ENCODE measurements at regions of chr11 and their contacts with region 1.

Region 1: GRCh38 chr11:67507864-67508485 is at the start of gene CDK2AP2:
- DNase-seq: peak; percentile 91 to 99 (median 97)
- ATAC-seq: peak; percentile 71
- H3K4me3 ChIP-seq: peak within 1 kb of the TSS; percentile 76
- H3K4me3 Mint-ChIP-seq: peak within 1 kb of the TSS; percentile 93
- H3K27ac ChIP-seq: peak within 1 kb of the TSS; percentile 87 to 97
- H3K27ac Mint-ChIP-seq: peak within 1 kb of the TSS; percentile 98
- H3K4me1 ChIP-seq: peaks cover 50% of the 10 kb centered on the region
- H3K4me1 Mint-ChIP-seq: peaks cover 44% of the 10 kb centered on the region
- H3K27me3 ChIP-seq: peaks cover 0 to 9% of the 10 kb centered on the region in 2 experiments
- H3K27me3 Mint-ChIP-seq: no peaks in the 10 kb centered on the region
- CTCF ChIP-seq: no peak
- total RNA-seq, gene CDK2AP2: 19.5 to 22.0 TPM

Region 2: DNA sequence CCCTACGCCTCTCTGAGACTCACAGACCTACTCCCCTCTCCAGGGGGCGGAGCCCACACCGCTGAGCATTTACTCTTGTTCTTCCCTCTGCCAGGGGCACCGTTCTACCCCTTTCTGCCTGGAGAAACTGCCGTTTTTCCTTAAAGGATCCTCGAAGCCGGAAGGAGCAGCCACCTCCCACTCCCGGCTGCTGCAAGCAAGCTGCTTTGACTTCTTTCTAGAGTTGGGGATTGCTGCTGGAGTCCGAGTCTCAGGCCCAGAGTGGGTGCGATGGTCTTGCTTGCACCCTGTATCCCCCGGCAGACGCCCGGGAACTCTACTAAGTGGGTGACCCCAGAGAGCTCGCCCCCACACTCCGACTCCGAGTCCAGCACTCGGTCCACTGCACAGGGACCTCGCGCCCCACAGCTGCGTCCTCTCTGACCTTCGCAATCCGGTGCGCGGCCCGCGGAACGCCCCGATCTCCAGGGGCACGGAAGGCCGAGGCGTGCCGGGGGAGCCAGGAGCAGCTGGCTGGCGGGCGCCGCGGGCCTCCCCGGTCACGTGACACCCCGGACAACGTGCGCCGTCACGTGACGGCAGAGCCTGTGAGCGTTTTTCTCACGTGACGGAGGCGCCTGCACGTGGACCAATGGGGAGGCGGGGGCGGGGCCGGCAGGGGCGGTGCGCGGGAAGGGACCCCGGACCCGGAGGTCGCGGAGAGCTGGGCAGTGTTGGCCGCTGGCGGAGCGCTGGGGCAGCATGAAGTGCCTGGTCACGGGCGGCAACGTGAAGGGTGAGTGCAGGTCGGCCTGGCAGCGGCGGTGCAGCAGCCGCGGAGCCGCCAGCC is 116.5 kb before region 1 on chr11 and contains the start of gene RAD9A:
- CTCF ChIA-PET with region 1: interaction called, 4 read pairs
- POLR2A ChIA-PET with region 1: interaction called, 3 read pairs
- intact Hi-C with region 1: loop called (anchors 1 kb)
- DNase-seq: peak; percentile 82 to 97 (median 90)
- ATAC-seq: peak; percentile 83
- H3K4me3 ChIP-seq: peak within 1 kb of the TSS; percentile 90
- H3K4me3 Mint-ChIP-seq: peak within 1 kb of the TSS; percentile 88
- H3K27ac ChIP-seq: peak within 1 kb of the TSS; percentile 55 to 77
- H3K27ac Mint-ChIP-seq: peak within 1 kb of the TSS; percentile 76
- H3K4me1 ChIP-seq: peaks cover 42% of the 10 kb centered on the region
- H3K4me1 Mint-ChIP-seq: peaks cover 38% of the 10 kb centered on the region
- H3K27me3 ChIP-seq: no peaks in the 10 kb centered on the region
- H3K27me3 Mint-ChIP-seq: no peaks in the 10 kb centered on the region
- CTCF ChIP-seq: no peak
- total RNA-seq, gene RAD9A: 19.3 to 20.3 TPM

Region 3: DNA sequence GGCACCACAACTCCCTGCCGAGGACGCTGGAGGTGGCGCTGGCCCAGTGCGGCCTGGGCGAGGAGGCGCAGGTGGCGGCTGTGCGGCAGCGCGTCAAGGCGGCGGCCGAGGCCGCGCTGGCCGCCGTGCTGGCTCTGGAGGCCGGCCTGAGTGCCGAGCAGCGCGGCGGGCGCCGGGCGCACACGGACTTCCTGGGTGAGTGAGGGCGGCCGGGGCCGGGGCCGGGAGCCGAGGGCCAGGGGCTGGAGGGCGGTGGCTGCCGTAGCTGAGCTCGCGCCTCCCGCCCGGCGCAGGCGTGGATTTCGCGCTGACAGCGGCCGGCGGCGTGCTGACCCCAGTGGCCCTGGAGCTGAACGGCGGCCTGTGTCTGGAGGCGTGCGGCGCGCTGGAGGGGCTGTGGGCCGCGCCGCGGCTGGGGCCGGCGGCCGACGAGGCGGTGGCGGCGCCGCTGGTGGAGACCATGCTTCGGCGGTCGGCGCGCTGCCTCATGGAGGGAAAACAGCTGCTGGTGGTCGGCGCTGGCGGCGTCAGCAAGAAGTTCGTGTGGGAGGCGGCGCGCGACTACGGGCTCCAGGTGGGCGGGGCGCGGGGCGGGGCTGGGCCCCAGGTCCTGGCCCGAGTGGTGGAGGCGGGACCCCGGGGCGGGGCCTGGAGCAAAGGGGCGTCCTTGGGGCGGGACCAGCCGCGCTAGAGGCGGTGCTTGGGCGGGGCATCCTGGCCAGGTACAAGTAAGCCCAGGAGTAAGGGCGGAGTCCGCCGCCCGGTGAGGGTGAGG is 87.1 kb before region 1 on chr11:
- CTCF ChIA-PET with region 1: no interaction called
- POLR2A ChIA-PET with region 1: interaction called, 4 read pairs
- intact Hi-C with region 1: loop called in 1 of 2 experiments (anchors 5 kb)
- DNase-seq: peak; percentile 97 to 100 (median 99)
- ATAC-seq: peak; percentile 79
- H3K4me3 ChIP-seq: peak overlapping the region; percentile 50
- H3K4me3 Mint-ChIP-seq: peak overlapping the region; percentile 86
- H3K27ac ChIP-seq: peak overlapping the region; percentile 15 to 79
- H3K27ac Mint-ChIP-seq: peak overlapping the region; percentile 94
- H3K4me1 ChIP-seq: peaks cover 57% of the 10 kb centered on the region
- H3K4me1 Mint-ChIP-seq: peaks cover 56% of the 10 kb centered on the region
- H3K27me3 ChIP-seq: no peaks in the 10 kb centered on the region
- H3K27me3 Mint-ChIP-seq: no peaks in the 10 kb centered on the region
- CTCF ChIP-seq: no peak

Region 4: DNA sequence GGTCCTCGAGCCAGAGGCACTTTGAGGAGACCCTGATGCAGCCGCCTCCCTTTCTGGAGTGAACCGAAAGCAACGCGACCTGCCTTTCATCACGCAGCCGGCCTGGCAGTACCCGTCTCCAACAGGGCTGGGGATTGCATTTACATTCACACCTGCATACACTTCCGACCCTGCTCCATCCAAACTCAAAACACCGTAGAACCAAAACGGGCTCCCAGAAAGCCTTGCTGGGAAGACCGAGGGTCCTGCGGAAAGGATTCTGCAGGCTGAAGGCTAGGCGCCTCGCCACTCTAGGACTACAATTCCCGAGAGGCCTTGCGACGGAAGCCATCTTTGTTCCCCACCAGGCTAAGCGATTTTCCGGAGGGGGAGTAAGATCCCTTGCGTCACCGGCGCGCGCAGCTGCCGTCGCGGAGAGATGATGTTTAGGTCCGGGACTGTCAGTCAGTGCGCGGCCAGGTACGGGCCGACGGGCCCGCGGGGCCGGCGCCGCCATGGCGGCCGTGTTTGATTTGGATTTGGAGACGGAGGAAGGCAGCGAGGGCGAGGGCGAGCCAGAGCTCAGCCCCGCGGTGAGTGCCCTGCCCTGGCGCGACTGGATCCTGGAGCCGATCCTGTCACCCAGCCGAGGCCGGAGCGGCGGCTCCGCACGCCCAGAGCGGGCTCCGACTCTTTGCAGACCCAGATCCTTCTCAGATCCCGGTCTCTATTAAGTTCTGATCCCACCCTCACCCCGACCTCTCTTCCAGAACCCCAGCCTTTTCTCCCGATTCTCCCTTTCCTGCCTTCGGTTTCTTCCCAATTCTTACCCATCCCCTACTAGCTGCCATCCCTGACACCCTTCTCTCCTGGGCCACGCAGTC is 79.7 kb before region 1 on chr11 and contains the start of gene RPS6KB2:
- CTCF ChIA-PET with region 1: no interaction called
- POLR2A ChIA-PET with region 1: interaction called, 4 read pairs
- intact Hi-C with region 1: loop called in 1 of 2 experiments (anchors 2 kb)
- DNase-seq: peak; percentile 96 to 100 (median 99)
- ATAC-seq: peak; percentile 84
- H3K4me3 ChIP-seq: peak within 1 kb of the TSS; percentile 92
- H3K4me3 Mint-ChIP-seq: peak within 1 kb of the TSS; percentile 98
- H3K27ac ChIP-seq: peak within 1 kb of the TSS; percentile 85 to 86
- H3K27ac Mint-ChIP-seq: peak within 1 kb of the TSS; percentile 96
- H3K4me1 ChIP-seq: peaks cover 59% of the 10 kb centered on the region
- H3K4me1 Mint-ChIP-seq: peaks cover 33% of the 10 kb centered on the region
- H3K27me3 ChIP-seq: no peaks in the 10 kb centered on the region
- H3K27me3 Mint-ChIP-seq: no peaks in the 10 kb centered on the region
- CTCF ChIP-seq: no peak
- total RNA-seq, gene RPS6KB2: 69.3 to 72.0 TPM

Region 5: DNA sequence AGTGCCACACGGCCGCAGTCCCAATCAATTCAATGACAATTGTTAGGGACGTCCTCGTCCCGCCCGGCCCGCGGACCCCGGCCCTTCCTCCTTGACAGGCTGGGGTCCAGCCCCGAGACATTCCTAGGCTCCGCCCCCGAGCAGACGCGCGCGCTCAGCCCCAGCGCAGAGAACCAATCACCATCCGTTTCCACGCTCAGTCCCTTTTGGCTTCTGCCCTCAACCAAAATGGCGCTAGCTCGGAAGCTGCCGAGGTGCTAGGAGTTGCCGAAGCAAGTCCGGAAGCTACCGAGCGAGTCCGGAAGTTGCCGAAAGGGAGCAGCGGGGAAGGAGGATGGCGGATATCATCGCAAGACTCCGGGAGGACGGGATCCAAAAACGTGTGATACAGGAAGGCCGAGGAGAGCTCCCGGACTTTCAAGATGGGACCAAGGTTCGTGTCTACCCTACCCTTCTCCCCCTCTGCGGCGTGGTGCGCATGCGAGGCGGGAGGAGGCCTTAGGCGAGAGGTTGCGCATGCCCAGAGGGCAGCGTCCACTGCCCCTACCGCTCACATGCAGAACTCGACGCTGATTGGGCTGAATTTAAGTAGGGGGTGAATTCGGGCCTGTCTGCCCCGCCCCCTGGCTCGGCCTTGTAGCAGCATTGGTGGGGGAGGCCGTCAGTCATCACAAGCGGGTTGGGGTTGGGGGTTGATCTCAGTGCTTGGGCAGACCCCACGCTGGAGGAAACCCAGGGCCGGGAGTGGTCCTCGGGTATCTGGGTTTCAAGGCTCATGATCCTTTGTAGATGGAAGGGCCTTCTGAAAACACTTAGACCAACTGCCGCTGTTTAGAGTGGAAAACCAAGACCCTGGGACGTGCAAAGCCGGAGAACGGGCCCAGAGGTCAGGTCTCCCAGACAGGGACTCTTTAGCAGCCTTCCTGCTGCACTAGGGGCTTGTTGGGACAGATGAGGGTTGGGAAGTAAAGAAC is 24.9 kb before region 1 on chr11 and contains the start of gene AIP:
- CTCF ChIA-PET with region 1: interaction called, 3 read pairs
- POLR2A ChIA-PET with region 1: interaction called, 35 read pairs
- intact Hi-C with region 1: loop called (anchors 1 kb)
- DNase-seq: peak; percentile 94 to 99 (median 97)
- ATAC-seq: peak; percentile 77
- H3K4me3 ChIP-seq: peak within 1 kb of the TSS; percentile 80
- H3K4me3 Mint-ChIP-seq: peak within 1 kb of the TSS; percentile 91
- H3K27ac ChIP-seq: peak within 1 kb of the TSS; percentile 90
- H3K27ac Mint-ChIP-seq: peak within 1 kb of the TSS; percentile 95
- H3K4me1 ChIP-seq: peaks cover 63% of the 10 kb centered on the region
- H3K4me1 Mint-ChIP-seq: peaks cover 56% of the 10 kb centered on the region
- H3K27me3 ChIP-seq: no peaks in the 10 kb centered on the region
- H3K27me3 Mint-ChIP-seq: no peaks in the 10 kb centered on the region
- CTCF ChIP-seq: peak; percentile 37
- total RNA-seq, gene AIP: 115 to 117 TPM

Region 6: GRCh38 chr11:67534070-67534679 is 26.2 kb after region 1 on chr11:
- CTCF ChIA-PET with region 1: no interaction called
- POLR2A ChIA-PET with region 1: no interaction called
- intact Hi-C with region 1: no loop called
- DNase-seq: no peak
- ATAC-seq: no peak
- H3K4me3 ChIP-seq: no peak overlapping the region
- H3K4me3 Mint-ChIP-seq: no peak overlapping the region
- H3K27ac ChIP-seq: no peak overlapping the region
- H3K27ac Mint-ChIP-seq: no peak overlapping the region
- H3K4me1 ChIP-seq: no peaks in the 10 kb centered on the region
- H3K4me1 Mint-ChIP-seq: no peaks in the 10 kb centered on the region
- H3K27me3 ChIP-seq: no peaks in the 10 kb centered on the region
- H3K27me3 Mint-ChIP-seq: peaks cover 3% of the 10 kb centered on the region
- CTCF ChIP-seq: no peak

Region 7: GRCh38 chr11:67583247-67584204 is 75.6 kb after region 1 on chr11 and contains the start of gene GSTP1:
- CTCF ChIA-PET with region 1: no interaction called
- POLR2A ChIA-PET with region 1: no interaction called
- intact Hi-C with region 1: loop called in 1 of 2 experiments (anchors 5 kb)
- DNase-seq: peak; percentile 54 to 90 (median 72)
- ATAC-seq: peak; percentile 77
- H3K4me3 ChIP-seq: peak within 1 kb of the TSS; percentile 58
- H3K4me3 Mint-ChIP-seq: peak within 1 kb of the TSS; percentile 92
- H3K27ac ChIP-seq: peak within 1 kb of the TSS; percentile 64 to 68
- H3K27ac Mint-ChIP-seq: peak within 1 kb of the TSS; percentile 85
- H3K4me1 ChIP-seq: peaks cover 34% of the 10 kb centered on the region
- H3K4me1 Mint-ChIP-seq: peaks cover 47% of the 10 kb centered on the region
- H3K27me3 ChIP-seq: peaks cover 0 to 3% of the 10 kb centered on the region in 2 experiments
- H3K27me3 Mint-ChIP-seq: no peaks in the 10 kb centered on the region
- CTCF ChIP-seq: peak; percentile 55
- total RNA-seq, gene GSTP1: 60.1 to 62.8 TPM

Region 8: DNA sequence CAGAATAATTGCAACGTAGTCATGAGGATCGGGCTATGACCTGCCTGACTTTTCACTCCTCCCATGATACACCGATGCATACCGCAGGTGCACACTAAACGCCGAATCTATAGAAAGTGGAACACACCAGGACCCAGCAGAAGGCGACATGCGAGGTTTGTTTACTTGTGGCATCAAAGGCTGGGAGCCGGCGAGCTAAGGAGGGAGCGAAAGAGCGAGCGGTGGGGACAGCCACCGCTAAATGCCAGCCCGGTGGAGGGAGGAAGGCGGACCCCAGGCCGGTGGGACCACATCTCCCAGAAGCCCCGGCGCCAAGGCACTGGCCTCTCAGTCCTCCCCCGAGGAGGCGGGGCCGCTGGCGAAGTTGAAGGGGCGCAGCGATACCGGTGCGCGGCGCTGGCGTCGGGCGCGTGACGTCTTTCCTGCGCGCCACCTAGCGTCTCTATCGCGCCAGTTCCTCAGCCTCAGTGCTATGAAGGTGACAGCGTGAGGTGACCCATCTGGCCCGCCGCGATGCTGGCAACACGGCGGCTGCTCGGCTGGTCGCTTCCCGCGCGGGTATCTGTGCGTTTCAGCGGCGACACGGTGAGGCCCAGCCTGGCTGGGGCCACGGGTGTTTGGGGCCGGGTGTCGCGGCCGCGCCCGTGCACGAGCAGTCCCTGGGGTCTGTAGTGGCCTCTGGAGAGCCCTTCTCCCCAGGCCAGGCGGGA is 98.7 kb after region 1 on chr11 and contains the start of gene NDUFV1:
- CTCF ChIA-PET with region 1: no interaction called
- POLR2A ChIA-PET with region 1: no interaction called
- intact Hi-C with region 1: loop called in 1 of 2 experiments (anchors 2 kb)
- DNase-seq: peak; percentile 93 to 98 (median 96)
- ATAC-seq: peak; percentile 98
- H3K4me3 ChIP-seq: peak within 1 kb of the TSS; percentile 83
- H3K4me3 Mint-ChIP-seq: peak within 1 kb of the TSS; percentile 88
- H3K27ac ChIP-seq: peak within 1 kb of the TSS; percentile 64 to 79
- H3K27ac Mint-ChIP-seq: peak within 1 kb of the TSS; percentile 70
- H3K4me1 ChIP-seq: peaks cover 23% of the 10 kb centered on the region
- H3K4me1 Mint-ChIP-seq: peaks cover 9% of the 10 kb centered on the region
- H3K27me3 ChIP-seq: peaks cover 0 to 3% of the 10 kb centered on the region in 2 experiments
- H3K27me3 Mint-ChIP-seq: peaks cover 11% of the 10 kb centered on the region
- CTCF ChIP-seq: peak; percentile 81
- total RNA-seq, gene NDUFV1: 223 to 224 TPM